ENCODE measurements at regions of chr7 and their contacts with region 1.

Region 1: GRCh38 chr7:94289071-94289470 is 105.6 kb upstream of the COL1A2 start:
- DNase-seq: peak; percentile 68
- H3K4me3 ChIP-seq: no peak overlapping the region; a peak in 1 of 4 replicates
- H3K27ac ChIP-seq: no peak overlapping the region; a peak in 1 of 4 replicates
- H3K4me1 ChIP-seq: peaks cover 2 to 4% of the 10 kb centered on the region in 2 experiments; a peak in 2 of 4 replicates
- H3K27me3 ChIP-seq: no peaks in the 10 kb centered on the region
- CTCF ChIP-seq: peak; percentile 100
- EP300 ChIP-seq: no peak; a peak in 2 of 4 replicates
- RAD21 ChIP-seq: peak; percentile 100

Region 2: DNA sequence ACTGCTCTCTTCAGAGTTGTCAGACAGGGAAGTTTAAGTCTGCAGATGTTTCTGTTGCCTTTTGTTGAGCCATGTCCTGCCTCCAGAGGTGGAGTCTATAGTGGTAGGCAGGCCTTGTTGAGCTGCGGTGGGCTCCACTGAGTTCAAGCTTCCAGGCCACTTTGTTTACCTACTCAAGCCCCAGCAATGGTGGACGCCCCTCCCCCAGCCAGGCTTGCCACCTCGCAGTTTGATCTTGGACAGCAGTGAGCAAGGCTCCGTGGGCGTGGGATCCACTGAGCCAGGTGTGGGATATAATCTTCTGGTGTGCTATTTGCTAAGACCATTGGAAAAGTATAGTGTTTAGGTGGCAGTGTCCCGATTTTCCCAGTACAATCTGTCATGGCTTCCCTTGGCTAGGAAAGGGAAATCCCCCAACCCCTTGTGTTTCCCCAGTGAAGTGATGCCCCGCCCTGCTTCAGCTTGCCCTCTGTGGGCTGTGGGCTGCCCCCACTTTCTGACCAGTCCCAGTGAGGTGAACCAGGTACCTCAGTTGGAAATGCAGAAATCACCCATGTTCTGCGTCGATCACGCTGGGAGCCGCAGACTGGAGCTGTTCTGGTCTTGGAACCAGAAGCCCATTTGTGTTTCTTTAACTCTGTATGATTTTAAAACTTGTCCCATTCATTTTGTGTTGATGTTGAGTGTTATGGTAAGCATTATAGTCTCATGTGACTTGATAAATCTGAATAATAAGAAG is 625.3 kb before region 1 on chr7:
- CTCF ChIA-PET with region 1: no interaction called
- POLR2A ChIA-PET with region 1: no interaction called
- DNase-seq: no peak
- H3K4me3 ChIP-seq: no peak overlapping the region
- H3K27ac ChIP-seq: no peak overlapping the region
- H3K4me1 ChIP-seq: no peaks in the 10 kb centered on the region
- H3K27me3 ChIP-seq: no peaks in the 10 kb centered on the region
- CTCF ChIP-seq: no peak
- EP300 ChIP-seq: no peak
- RAD21 ChIP-seq: no peak

Region 3: DNA sequence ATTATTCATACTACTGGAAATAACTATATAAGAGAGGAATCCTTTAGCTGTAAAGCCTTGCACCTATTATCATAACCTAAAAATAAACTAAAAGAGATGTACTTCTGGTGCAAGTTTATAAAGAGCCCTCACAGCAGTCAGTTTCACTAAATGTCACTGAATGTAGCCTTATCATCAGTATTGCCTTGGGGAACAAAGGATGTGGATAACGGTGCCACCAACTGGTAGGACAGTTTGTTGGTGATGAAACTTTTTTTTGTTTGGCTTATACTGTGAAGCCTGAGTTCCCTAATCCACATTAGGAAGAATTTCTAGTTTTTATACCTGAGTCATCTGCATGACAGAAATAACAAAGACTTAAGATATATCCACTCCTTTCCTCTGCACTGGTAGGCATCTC is 12.3 kb before region 1 on chr7:
- CTCF ChIA-PET with region 1: interaction called, 53 read pairs
- POLR2A ChIA-PET with region 1: no interaction called
- DNase-seq: peak; percentile 37
- H3K4me3 ChIP-seq: no peak overlapping the region
- H3K27ac ChIP-seq: peak overlapping the region in 1 of 2 experiments; percentile 94; a peak in 3 of 4 replicates
- H3K4me1 ChIP-seq: peaks cover 0 to 16% of the 10 kb centered on the region in 2 experiments; a peak in 2 of 4 replicates
- H3K27me3 ChIP-seq: no peaks in the 10 kb centered on the region
- CTCF ChIP-seq: peak; percentile 58
- EP300 ChIP-seq: peak in 1 of 2 experiments; percentile 54; a peak in 2 of 4 replicates
- RAD21 ChIP-seq: peak; percentile 92

Region 4: GRCh38 chr7:94395141-94396036 is 106.3 kb after region 1 on chr7:
- CTCF ChIA-PET with region 1: interaction called, 67 read pairs
- POLR2A ChIA-PET with region 1: no interaction called
- DNase-seq: peak; percentile 76
- H3K4me3 ChIP-seq: no peak overlapping the region; a peak in 1 of 4 replicates
- H3K27ac ChIP-seq: peak overlapping the region; percentile 50 to 76; a peak in 3 of 4 replicates
- H3K4me1 ChIP-seq: peaks cover 5 to 36% of the 10 kb centered on the region in 2 experiments
- H3K27me3 ChIP-seq: no peaks in the 10 kb centered on the region
- CTCF ChIP-seq: peak; percentile 98
- EP300 ChIP-seq: no peak
- RAD21 ChIP-seq: peak; percentile 94

Region 5: GRCh38 chr7:94449148-94449725 is 160.2 kb after region 1 on chr7:
- CTCF ChIA-PET with region 1: interaction called, 344 read pairs
- POLR2A ChIA-PET with region 1: no interaction called
- DNase-seq: peak; percentile 49
- H3K4me3 ChIP-seq: no peak overlapping the region
- H3K27ac ChIP-seq: no peak overlapping the region
- H3K4me1 ChIP-seq: peaks cover 0 to 11% of the 10 kb centered on the region in 2 experiments; a peak in 2 of 4 replicates
- H3K27me3 ChIP-seq: no peaks in the 10 kb centered on the region
- CTCF ChIP-seq: peak; percentile 88
- EP300 ChIP-seq: no peak
- RAD21 ChIP-seq: peak; percentile 97

Region 6: DNA sequence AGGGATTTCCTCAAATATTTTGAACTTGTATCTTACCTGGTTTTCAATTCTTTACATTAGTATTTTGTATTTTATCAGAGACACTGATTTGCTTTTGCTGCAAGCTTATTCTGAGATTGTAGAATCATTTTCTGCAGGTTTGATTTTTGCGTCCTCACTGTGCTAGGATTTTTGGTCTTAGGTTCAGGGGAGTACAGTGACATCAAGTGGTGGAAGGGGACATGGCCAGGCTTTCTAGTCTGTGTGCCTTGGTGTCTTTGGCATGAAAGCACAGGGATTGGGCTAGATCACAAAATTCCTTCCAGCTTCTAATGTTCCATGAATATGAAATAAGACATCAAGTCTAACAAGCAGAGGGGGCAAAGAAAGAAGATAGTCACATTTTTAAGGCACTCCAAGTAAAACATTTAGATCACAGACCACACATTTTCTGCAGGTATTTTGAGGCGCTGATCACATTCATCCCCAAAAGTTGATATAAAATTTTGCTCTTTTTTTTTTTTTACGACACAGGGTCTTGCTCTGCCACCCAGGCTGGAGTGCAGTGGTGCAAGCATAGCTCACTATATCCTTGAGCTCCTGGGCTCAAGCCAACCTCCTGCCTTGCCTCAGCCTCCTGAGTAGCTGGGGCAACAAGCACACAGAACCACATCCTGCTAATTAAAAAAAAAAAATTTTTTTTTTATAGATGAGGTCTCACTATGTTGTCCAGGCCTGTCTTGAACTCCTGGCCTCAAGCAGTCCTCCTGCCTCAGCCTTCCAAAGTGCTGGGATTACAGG is 910.9 kb after region 1 on chr7:
- CTCF ChIA-PET with region 1: interaction called, 18 read pairs
- POLR2A ChIA-PET with region 1: no interaction called
- DNase-seq: peak; percentile 69
- H3K4me3 ChIP-seq: no peak overlapping the region; a peak in 1 of 4 replicates
- H3K27ac ChIP-seq: no peak overlapping the region
- H3K4me1 ChIP-seq: peaks cover 0 to 12% of the 10 kb centered on the region in 2 experiments; a peak in 2 of 4 replicates
- H3K27me3 ChIP-seq: peaks cover 7% of the 10 kb centered on the region; the same call in 1 of the 2 replicates
- CTCF ChIP-seq: peak; percentile 82
- EP300 ChIP-seq: no peak
- RAD21 ChIP-seq: peak; percentile 95

Measured in SK-N-SH (cell line).